ENCODE measurements at regions of chr7 and their contacts with region 1.

Region 1: DNA sequence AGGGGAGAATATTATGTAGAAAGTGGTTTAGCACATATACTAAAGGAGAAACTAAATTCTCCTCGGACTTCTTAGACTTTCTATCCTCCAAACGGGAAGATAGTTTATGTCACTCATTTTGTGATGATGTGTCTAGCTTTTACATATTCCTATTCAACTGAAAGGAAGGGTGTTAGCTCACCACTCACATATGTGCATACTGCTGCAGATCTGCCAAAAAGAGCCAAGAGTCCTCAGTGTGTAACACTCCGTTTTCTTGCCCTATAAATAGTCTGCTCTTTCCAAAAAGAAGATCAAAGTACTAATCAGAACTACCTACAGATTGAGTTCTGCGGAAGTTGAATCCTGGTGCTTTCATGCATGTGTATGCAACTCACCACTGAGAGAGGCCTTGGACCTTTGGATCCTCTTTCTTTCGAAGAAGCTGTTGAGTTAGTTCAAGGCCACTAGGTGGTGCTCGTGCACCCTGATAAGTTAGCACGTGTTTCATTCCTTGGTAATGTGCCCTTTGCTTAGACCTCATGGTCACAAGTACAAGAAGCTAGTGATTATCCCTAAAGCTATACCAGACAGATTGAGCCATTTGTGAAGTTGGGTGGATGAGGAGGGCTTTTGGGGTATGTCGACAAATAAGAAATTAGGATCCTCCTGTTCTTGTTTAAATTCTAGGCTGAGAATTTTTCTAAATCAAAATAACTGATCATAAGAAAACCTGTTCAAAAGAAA is 14.1 kb downstream of the YAE1 start:
- DNase-seq: peak; percentile 60 to 77 (median 66)
- ATAC-seq: peak; percentile 100
- H3K4me3 ChIP-seq: no peak overlapping the region
- H3K27ac ChIP-seq: no peak overlapping the region
- H3K4me1 ChIP-seq: no peaks in the 10 kb centered on the region
- H3K27me3 ChIP-seq: no peaks in the 10 kb centered on the region
- CTCF ChIP-seq: peak; percentile 83 to 93 (median 90)
- POLR2A ChIP-seq: no peak

Region 2: DNA sequence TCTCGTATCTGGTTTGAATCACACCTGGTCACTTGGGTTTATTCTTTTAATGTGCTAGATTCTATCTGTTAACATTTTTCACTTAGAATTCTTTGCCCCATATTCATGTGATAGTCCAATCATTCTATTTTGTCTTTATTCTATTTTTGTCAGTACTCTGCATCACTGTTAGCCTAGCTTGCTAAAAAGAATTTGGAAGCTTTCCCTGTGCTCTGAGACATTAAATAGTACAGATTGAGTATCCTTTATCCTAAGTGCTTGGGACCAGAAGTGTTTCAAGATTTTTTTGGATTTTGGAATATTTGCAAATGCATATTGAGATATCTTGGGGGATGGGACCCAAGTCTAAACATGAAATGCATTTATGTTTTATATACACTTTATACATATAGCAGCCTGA is 94.1 kb after region 1 on chr7:
- intact Hi-C with region 1: no loop called
- DNase-seq: no peak
- ATAC-seq: no peak
- H3K4me3 ChIP-seq: no peak overlapping the region
- H3K27ac ChIP-seq: no peak overlapping the region
- H3K4me1 ChIP-seq: no peaks in the 10 kb centered on the region
- H3K27me3 ChIP-seq: no peaks in the 10 kb centered on the region
- CTCF ChIP-seq: no peak
- POLR2A ChIP-seq: no peak

Region 3: GRCh38 chr7:39746103-39746819 is 165.9 kb after region 1 on chr7:
- intact Hi-C with region 1: loop called (anchors 5 to 10 kb)
- DNase-seq: peak; percentile 60 to 74 (median 67)
- ATAC-seq: peak; percentile 93 to 95 (median 95)
- H3K4me3 ChIP-seq: no peak overlapping the region
- H3K27ac ChIP-seq: no peak overlapping the region
- H3K4me1 ChIP-seq: peaks cover 0 to 3% (median 0%) of the 10 kb centered on the region in 4 donors
- H3K27me3 ChIP-seq: no peaks in the 10 kb centered on the region
- CTCF ChIP-seq: peak; percentile 72 to 80 (median 76)
- POLR2A ChIP-seq: no peak